H1 (cell line): ENCODE measurements at regions of chr22 and their contacts with region 1.

Region 1: GRCh38 chr22:41301105-41302020 is at the start of gene ZC3H7B:
- DNase-seq: peak in 1 of 2 experiments; percentile 82
- H3K4me3 ChIP-seq: peak within 1 kb of the TSS; percentile 84 to 90 (median 86)
- H3K27ac ChIP-seq: 0 out of 2 replicates have a peak within 1 kb of the TSS, but pooled peaks have one; percentile 11
- H3K4me1 ChIP-seq: peaks cover 0 to 8% (median 6%) of the 10 kb centered on the region in 4 experiments; a peak in 4 of 7 replicates
- H3K27me3 ChIP-seq: no peaks in the 10 kb centered on the region
- CTCF ChIP-seq: peak; percentile 44 to 51 (median 44)
- EP300 ChIP-seq: no peak
- POLR2A ChIP-seq: peak; percentile 66 to 80
- RAD21 ChIP-seq: peak; percentile 30 to 53; a peak in 3 of 4 replicates
- total RNA-seq, gene ZC3H7B: 77.3 and 78.6 TPM in 2 replicates

Region 2: GRCh38 chr22:41226723-41227655 is 74.4 kb before region 1 on chr22:
- CTCF ChIA-PET with region 1: no interaction called
- POLR2A ChIA-PET with region 1: no interaction called
- DNase-seq: no peak
- H3K4me3 ChIP-seq: no peak overlapping the region
- H3K27ac ChIP-seq: no peak overlapping the region
- H3K4me1 ChIP-seq: no peaks in the 10 kb centered on the region
- H3K27me3 ChIP-seq: peaks cover 0 to 2% (median 0%) of the 10 kb centered on the region in 4 experiments; a peak in 1 of 7 replicates
- CTCF ChIP-seq: no peak
- EP300 ChIP-seq: no peak
- POLR2A ChIP-seq: no peak
- RAD21 ChIP-seq: no peak

Region 3: DNA sequence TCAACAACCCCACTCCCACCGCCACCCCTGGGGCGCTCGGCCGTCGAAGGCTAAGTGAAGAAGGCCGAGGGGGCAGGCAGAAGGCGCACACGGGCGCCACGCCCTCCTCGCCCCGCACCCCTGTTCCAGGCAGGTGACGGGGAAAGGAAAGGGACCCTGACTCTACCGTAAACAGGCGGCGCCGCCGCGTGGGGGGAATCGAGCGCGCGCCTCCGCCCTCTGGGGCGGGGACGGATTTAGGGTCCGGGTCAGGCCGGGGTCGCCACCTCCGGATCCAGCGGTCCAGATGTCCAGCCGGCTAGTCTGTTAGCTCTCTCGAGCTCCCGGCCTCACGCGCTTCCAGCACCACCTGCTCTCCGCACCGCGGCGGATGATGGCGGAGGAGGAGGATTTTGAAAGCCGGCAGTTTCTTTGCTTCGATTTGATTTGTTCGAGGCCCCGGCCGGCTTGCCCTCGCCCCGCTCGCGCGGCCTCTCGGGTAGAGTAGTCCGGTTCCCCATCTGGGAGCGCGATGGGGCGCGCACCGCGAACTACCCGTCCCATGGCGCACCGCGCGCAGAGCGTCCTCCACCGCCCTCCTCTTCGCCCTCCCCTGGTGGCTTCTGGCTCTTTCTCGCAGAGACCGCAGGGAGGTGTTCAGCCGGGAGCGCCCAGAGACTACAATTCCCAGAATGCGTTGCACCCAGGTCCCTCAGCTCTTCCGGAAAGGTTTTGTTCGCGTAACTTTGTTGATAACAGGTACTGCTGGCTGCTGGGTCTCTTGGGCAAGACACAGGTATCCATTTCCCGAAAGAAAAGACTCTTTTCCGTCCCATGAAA is 15.3 kb before region 1 on chr22 and contains the start of gene RANGAP1:
- CTCF ChIA-PET with region 1: interaction called, 6 read pairs
- POLR2A ChIA-PET with region 1: interaction called, 18 read pairs
- DNase-seq: peak; percentile 95
- H3K4me3 ChIP-seq: peak within 1 kb of the TSS; percentile 76 to 93 (median 82)
- H3K27ac ChIP-seq: peak within 1 kb of the TSS; percentile 67
- H3K4me1 ChIP-seq: peaks cover 2 to 20% (median 10%) of the 10 kb centered on the region in 4 experiments; a peak in 6 of 7 replicates
- H3K27me3 ChIP-seq: no peaks in the 10 kb centered on the region
- CTCF ChIP-seq: peak in 1 of 3 experiments; percentile 22; a peak in 1 of 4 replicates
- EP300 ChIP-seq: no peak
- POLR2A ChIP-seq: peak; percentile 83 to 94
- RAD21 ChIP-seq: no peak
- total RNA-seq, gene RANGAP1: 171 and 176 TPM in 2 replicates

Region 4: DNA sequence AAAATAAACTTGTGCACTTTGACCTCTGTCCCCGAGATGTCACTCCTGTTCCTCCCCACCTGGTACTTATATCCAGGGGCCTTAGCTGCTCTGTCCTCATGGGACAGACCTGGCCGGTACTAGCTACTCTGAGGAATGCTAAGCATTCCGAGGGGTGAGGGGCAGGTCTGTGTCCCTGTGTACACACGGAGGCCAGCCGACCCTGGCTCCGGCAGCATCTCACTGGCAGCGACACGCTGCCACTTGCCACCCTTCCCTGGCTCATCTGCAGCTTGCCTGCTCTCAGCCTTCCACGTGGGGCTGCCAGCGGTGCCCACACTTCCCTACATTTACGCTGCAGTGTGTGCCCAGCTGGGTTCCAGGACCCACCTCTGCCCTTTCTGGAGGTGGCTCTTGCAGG is 58.8 kb after region 1 on chr22:
- CTCF ChIA-PET with region 1: no interaction called
- POLR2A ChIA-PET with region 1: interaction called, 19 read pairs
- DNase-seq: peak in 1 of 2 experiments; percentile 10
- H3K4me3 ChIP-seq: peak overlapping the region in 2 of 4 experiments; percentile 12 to 21; a peak in 2 of 8 replicates
- H3K27ac ChIP-seq: peak overlapping the region; percentile 37; the same call in 1 of the 2 replicates
- H3K4me1 ChIP-seq: peaks cover 6 to 24% (median 12%) of the 10 kb centered on the region in 4 experiments
- H3K27me3 ChIP-seq: no peaks in the 10 kb centered on the region
- CTCF ChIP-seq: no peak
- EP300 ChIP-seq: peak in 1 of 2 experiments; percentile 85; a peak in 2 of 3 replicates
- POLR2A ChIP-seq: peak in 1 of 2 experiments; percentile 52; a peak in 1 of 3 replicates
- RAD21 ChIP-seq: peak; percentile 3 to 16; a peak in 2 of 4 replicates